ENCODE measurements at regions of chr12 and their contacts with region 1.

Region 1: GRCh38 chr12:48618541-48618940 is 48.7 kb upstream of the LALBA start:
- DNase-seq: peak; percentile 58
- ATAC-seq: peak; percentile 91
- H3K4me3 ChIP-seq: no peak overlapping the region
- H3K27ac ChIP-seq: no peak overlapping the region
- H3K4me1 ChIP-seq: no peaks in the 10 kb centered on the region
- H3K27me3 ChIP-seq: 0 out of 5 replicates have a peak, but pooled peaks cover 0 to 2% of the 10 kb centered on the region in 2 experiments
- CTCF ChIP-seq: peak; percentile 93
- EP300 ChIP-seq: no peak
- POLR2A ChIP-seq: no peak
- RAD21 ChIP-seq: peak; percentile 81

Region 2: GRCh38 chr12:48183091-48183875 is 435.3 kb before region 1 on chr12 and contains the start of gene CCDC184:
- CTCF ChIA-PET with region 1: no interaction called
- POLR2A ChIA-PET with region 1: no interaction called
- in situ Hi-C with region 1: no loop called
- intact Hi-C with region 1: loop called (anchors 10 kb)
- DNase-seq: no peak
- ATAC-seq: peak; percentile 77
- H3K4me3 ChIP-seq: no peak within 1 kb of the TSS; a peak in 1 of 6 replicates
- H3K27ac ChIP-seq: no peak within 1 kb of the TSS
- H3K4me1 ChIP-seq: 0 out of 2 replicates have a peak, but pooled peaks cover 7% of the 10 kb centered on the region
- H3K27me3 ChIP-seq: peaks cover 2 to 67% of the 10 kb centered on the region in 2 experiments; a peak in 4 of 5 replicates
- CTCF ChIP-seq: peak; percentile 21; the same call in 1 of the 2 replicates
- EP300 ChIP-seq: no peak
- POLR2A ChIP-seq: no peak
- RAD21 ChIP-seq: no peak
- total RNA-seq, gene CCDC184: not detected in 2 replicates

Region 3: GRCh38 chr12:48489012-48489411 is 129.5 kb before region 1 on chr12:
- CTCF ChIA-PET with region 1: no interaction called
- POLR2A ChIA-PET with region 1: no interaction called
- in situ Hi-C with region 1: no loop called
- intact Hi-C with region 1: no loop called
- DNase-seq: no peak
- ATAC-seq: no peak
- H3K4me3 ChIP-seq: no peak overlapping the region
- H3K27ac ChIP-seq: no peak overlapping the region
- H3K4me1 ChIP-seq: no peaks in the 10 kb centered on the region
- H3K27me3 ChIP-seq: peaks cover 0 to 12% of the 10 kb centered on the region in 2 experiments; a peak in 2 of 5 replicates
- CTCF ChIP-seq: no peak
- EP300 ChIP-seq: no peak
- POLR2A ChIP-seq: no peak
- RAD21 ChIP-seq: no peak

Region 4: GRCh38 chr12:48542300-48542928 is 76.1 kb before region 1 on chr12:
- CTCF ChIA-PET with region 1: interaction called, 24 read pairs
- POLR2A ChIA-PET with region 1: no interaction called
- in situ Hi-C with region 1: loop called (anchors 5 kb)
- intact Hi-C with region 1: loop called (anchors 1 kb)
- DNase-seq: peak; percentile 27
- ATAC-seq: peak; percentile 75
- H3K4me3 ChIP-seq: no peak overlapping the region
- H3K27ac ChIP-seq: no peak overlapping the region
- H3K4me1 ChIP-seq: no peaks in the 10 kb centered on the region
- H3K27me3 ChIP-seq: no peaks in the 10 kb centered on the region
- CTCF ChIP-seq: peak; percentile 80
- EP300 ChIP-seq: no peak
- POLR2A ChIP-seq: no peak
- RAD21 ChIP-seq: peak; percentile 69

Region 5: GRCh38 chr12:48936379-48936979 is 317.9 kb after region 1 on chr12:
- CTCF ChIA-PET with region 1: no interaction called
- POLR2A ChIA-PET with region 1: no interaction called
- in situ Hi-C with region 1: no loop called
- intact Hi-C with region 1: no loop called
- DNase-seq: peak; percentile 43
- ATAC-seq: peak; percentile 86
- H3K4me3 ChIP-seq: no peak overlapping the region
- H3K27ac ChIP-seq: no peak overlapping the region
- H3K4me1 ChIP-seq: peaks cover 7% of the 10 kb centered on the region
- H3K27me3 ChIP-seq: no peaks in the 10 kb centered on the region
- CTCF ChIP-seq: peak; percentile 89
- EP300 ChIP-seq: no peak
- POLR2A ChIP-seq: no peak
- RAD21 ChIP-seq: peak; percentile 67; the same call in 1 of the 2 replicates

Region 6: GRCh38 chr12:49260166-49260565 is 641.6 kb after region 1 on chr12:
- CTCF ChIA-PET with region 1: no interaction called
- POLR2A ChIA-PET with region 1: no interaction called
- in situ Hi-C with region 1: no loop called
- intact Hi-C with region 1: no loop called
- DNase-seq: no peak
- ATAC-seq: no peak
- H3K4me3 ChIP-seq: no peak overlapping the region
- H3K27ac ChIP-seq: no peak overlapping the region
- H3K4me1 ChIP-seq: peaks cover 45% of the 10 kb centered on the region
- H3K27me3 ChIP-seq: no peaks in the 10 kb centered on the region; a peak in 1 of 5 replicates
- CTCF ChIP-seq: no peak
- EP300 ChIP-seq: no peak
- POLR2A ChIP-seq: no peak
- RAD21 ChIP-seq: no peak

Measured in HepG2 (cell line).